Posterior vena cava (tissue), 2 donors: ENCODE measurements at regions of chr12 and their contacts with region 1.

Region 1: DNA sequence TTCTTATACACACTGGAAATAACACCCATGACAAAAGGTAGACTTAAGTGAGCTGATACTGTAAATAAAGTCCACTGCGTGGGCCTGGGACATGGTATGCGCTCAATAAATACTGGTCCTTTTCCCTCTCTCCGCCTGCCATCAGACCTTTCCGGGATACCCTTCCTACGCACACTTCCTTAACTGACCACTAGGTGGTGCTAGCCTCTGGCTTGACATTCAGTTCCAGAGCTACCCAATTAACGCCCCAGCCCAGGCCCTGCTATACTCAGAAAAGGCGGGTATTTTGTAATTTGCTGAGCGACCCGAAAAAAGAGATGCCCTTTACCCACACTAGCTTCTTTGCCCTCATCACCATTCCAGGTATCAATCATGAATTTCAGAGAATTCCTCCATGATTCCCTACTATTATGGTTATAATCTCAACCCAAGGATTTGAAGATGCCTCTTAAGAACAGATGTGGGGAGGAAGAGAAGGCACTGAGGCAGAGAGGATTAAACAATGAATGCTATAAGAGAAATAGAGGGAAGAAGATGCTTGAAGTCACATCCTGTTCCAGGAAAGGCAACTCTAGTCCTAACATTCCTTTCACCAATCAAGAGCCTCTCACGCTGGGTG is 3.9 kb upstream of the LRP1 start:
- DNase-seq: peak; percentile 85

Region 2: DNA sequence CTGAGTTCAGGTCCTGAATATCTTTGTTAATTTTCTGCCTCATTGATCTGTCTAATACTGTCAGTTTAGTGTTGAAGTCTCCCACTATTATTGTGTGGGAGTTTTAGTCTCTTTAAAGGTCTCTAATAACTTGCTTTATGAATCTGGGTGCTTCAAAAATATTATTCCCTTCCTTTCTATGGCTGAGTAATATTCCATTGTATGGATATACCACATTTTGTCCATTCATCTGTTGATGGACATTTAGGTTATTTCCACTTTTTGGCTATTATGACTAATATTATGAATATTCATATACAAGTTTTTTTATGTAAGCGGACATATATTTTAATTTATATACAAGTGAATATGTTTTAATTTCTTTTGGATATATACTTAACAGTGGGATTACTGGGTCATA is 272.9 kb before region 1 on chr12:
- intact Hi-C with region 1: no loop called
- DNase-seq: no peak

Region 3: GRCh38 chr12:57175428-57176138 is 51.2 kb after region 1 on chr12:
- intact Hi-C with region 1: loop called (anchors 2 kb)
- DNase-seq: peak; percentile 95

Region 4: DNA sequence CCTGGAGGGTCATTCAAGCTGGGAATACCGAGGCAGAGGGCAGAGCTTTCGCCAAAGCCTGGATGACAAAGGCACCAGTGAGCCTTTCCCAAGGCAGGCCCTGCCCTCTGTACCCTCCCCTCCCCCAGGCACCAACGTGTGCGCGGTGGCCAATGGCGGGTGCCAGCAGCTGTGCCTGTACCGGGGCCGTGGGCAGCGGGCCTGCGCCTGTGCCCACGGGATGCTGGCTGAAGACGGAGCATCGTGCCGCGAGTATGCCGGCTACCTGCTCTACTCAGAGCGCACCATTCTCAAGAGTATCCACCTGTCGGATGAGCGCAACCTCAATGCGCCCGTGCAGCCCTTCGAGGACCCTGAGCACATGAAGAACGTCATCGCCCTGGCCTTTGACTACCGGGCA is 61.0 kb after region 1 on chr12:
- intact Hi-C with region 1: loop called in 1 of 2 experiments (anchors 2 kb)
- DNase-seq: no peak